ENCODE measurements at regions of chr6 and their contacts with region 1.

Region 1: GRCh38 chr6:99868074-99868702 is 125.8 kb downstream of the MCHR2 start:
- DNase-seq: peak; percentile 47
- CTCF ChIP-seq: peak; percentile 79

Region 2: GRCh38 chr6:99879431-99879830 is 11.2 kb after region 1 on chr6:
- CTCF ChIA-PET with region 1: interaction called, 26 read pairs
- POLR2A ChIA-PET with region 1: no interaction called
- DNase-seq: no peak
- CTCF ChIP-seq: no peak

Region 3: DNA sequence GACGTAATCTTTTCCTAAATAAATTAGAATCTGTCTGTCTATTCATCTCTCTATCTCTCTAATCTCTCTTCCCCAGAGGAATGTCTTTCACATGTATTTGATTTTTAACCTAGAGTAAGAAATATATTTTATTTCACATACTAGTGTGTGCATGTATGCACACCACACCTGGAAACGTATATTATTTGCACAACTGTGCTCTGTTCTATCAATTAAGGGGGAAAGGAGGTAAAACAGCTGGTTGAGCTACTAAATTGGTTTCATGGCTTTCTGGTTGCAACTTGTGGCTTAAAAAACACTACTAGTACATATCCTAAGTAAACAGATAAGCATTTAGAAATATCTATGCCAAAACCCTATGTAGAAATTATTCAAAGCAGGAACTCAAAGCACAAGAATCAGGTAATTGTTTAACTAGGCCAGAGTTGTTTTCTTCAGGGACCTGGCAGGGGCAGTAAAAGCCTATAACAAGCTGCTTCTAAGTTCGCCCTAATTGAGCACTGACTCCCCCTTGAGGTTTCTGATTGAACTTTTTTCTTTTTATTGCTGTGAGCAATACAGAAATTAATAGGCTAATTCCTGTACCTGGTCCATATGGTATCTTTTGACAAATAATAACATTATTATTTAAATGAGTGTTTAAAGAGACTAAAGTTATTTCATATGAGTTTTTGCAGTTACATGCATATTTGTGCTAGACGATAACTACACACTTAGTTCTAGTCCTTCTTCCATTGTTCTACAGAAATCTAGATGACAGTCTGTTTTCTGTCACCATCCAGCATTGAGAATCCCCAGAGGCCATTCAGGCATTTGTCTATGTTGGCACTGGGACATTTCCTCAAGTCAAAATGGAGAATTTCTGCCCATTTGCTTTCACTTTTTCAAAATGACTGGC is 37.3 kb after region 1 on chr6:
- CTCF ChIA-PET with region 1: interaction called, 27 read pairs
- POLR2A ChIA-PET with region 1: no interaction called
- DNase-seq: peak; percentile 29
- CTCF ChIP-seq: peak; percentile 53

Region 4: GRCh38 chr6:100099189-100100074 is 231.2 kb after region 1 on chr6:
- CTCF ChIA-PET with region 1: interaction called, 111 read pairs
- POLR2A ChIA-PET with region 1: no interaction called
- DNase-seq: peak; percentile 22
- CTCF ChIP-seq: peak; percentile 45

Measured in GM10248 (cell line).